K562 (cell line): ENCODE measurements at regions of chr2 and their contacts with region 1.

Region 1: DNA sequence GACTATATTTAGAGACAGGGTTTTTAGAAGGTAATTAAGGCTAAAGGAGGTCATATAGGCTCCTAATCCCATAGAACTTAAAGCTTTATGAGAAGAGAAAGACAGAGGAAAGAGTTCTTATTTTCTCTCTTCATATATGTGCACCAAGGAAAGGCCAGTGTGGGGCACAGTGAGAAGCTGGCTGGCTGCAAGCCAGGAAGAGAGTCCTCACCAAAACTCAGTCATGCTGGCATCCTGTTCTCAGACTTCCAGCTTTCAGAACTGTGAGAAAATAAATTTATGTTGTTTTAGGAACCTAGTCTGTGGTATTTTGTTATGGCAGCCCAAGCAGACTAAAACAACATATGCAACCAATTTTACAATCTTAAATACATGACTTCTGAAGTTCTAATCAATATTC is 31.5 kb upstream of the ATIC start:
- DNase-seq: no peak
- ATAC-seq: no peak
- H3K4me3 ChIP-seq: no peak overlapping the region
- H3K27ac ChIP-seq: no peak overlapping the region
- H3K4me1 ChIP-seq: peaks cover 7 to 11% of the 10 kb centered on the region in 2 experiments; a peak in 3 of 5 replicates
- H3K27me3 ChIP-seq: no peaks in the 10 kb centered on the region
- CTCF ChIP-seq: no peak
- EP300 ChIP-seq: no peak
- POLR2A ChIP-seq: no peak
- RAD21 ChIP-seq: no peak

Region 2: DNA sequence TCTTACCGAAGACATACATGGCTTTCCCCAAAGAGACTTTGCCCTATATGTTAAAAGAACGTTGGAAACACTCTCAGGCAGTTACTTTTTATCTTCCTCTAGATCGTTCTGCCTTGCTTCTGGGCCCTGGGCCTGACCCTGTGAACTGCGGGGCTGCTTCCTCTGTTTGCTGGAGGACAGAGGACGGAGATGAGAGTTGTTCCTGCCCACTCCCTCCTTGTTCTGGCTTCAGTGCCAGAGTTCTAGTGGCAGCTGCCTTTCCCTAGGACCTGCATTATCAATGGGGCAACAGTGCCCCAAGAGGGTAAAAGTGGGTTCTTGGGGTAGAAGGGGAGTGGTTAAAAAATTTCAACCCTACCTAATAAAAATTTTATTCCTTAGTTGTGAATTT is 162.1 kb after region 1 on chr2:
- CTCF ChIA-PET with region 1: no interaction called
- POLR2A ChIA-PET with region 1: no interaction called
- in situ Hi-C with region 1: no loop called
- intact Hi-C with region 1: loop called (anchors 10 kb)
- DNase-seq: peak in 2 of 4 experiments; percentile 13 to 48
- ATAC-seq: peak; percentile 82
- H3K4me3 ChIP-seq: no peak overlapping the region
- H3K27ac ChIP-seq: peak overlapping the region; percentile 61; the same call in 1 of the 3 replicates
- H3K4me1 ChIP-seq: peaks cover 0 to 9% of the 10 kb centered on the region in 2 experiments; a peak in 3 of 5 replicates
- H3K27me3 ChIP-seq: no peaks in the 10 kb centered on the region
- CTCF ChIP-seq: peak in 1 of 3 experiments; percentile 10; a peak in 1 of 6 replicates
- EP300 ChIP-seq: no peak; the same call in 1 of the 2 replicates
- POLR2A ChIP-seq: no peak
- RAD21 ChIP-seq: no peak